BJ (cell line): ENCODE measurements at regions of chr9 and their contacts with region 1.

Region 1: GRCh38 chr9:101618698-101619097 is 23.9 kb upstream of the PPP3R2 start:
- DNase-seq: no peak
- H3K4me3 ChIP-seq: no peak overlapping the region
- H3K27me3 ChIP-seq: no peaks in the 10 kb centered on the region
- CTCF ChIP-seq: no peak

Region 2: GRCh38 chr9:101486693-101487442 is 131.8 kb before region 1 on chr9:
- CTCF ChIA-PET with region 1: no interaction called
- POLR2A ChIA-PET with region 1: no interaction called
- DNase-seq: no peak
- H3K4me3 ChIP-seq: peak overlapping the region; percentile 41
- H3K27me3 ChIP-seq: no peaks in the 10 kb centered on the region
- CTCF ChIP-seq: peak; percentile 31

Region 3: DNA sequence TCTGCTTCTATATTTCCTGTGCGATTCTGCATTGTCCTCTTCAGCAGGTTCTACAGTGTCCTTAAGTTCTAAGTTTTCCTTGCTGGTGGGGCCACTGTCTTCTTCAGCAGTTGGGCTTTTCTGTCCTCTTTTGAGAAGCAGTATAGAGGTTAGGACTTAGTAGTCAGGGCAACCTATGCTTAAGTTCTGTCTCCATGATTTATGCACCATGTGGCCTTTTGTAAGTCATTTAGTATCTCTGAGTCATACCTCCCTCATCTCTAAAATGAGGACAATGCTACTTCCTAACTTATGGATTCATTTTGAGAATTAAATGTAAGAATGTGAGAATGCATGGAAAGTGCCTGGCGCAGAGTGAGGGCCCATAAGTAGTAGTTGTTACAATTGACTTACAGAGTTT is 73.0 kb after region 1 on chr9:
- CTCF ChIA-PET with region 1: no interaction called
- POLR2A ChIA-PET with region 1: no interaction called
- DNase-seq: no peak
- H3K4me3 ChIP-seq: no peak overlapping the region
- H3K27me3 ChIP-seq: no peaks in the 10 kb centered on the region
- CTCF ChIP-seq: no peak

Region 4: GRCh38 chr9:102237520-102237919 is 618.8 kb after region 1 on chr9:
- CTCF ChIA-PET with region 1: no interaction called
- POLR2A ChIA-PET with region 1: interaction called, 16 read pairs
- DNase-seq: no peak
- H3K4me3 ChIP-seq: no peak overlapping the region
- H3K27me3 ChIP-seq: no peaks in the 10 kb centered on the region
- CTCF ChIP-seq: no peak